Mammary epithelial cell (primary cell): ENCODE measurements at regions of chr12 and their contacts with region 1.

Region 1: GRCh38 chr12:87866578-87867292 is 162.5 kb downstream of the C12orf50 start:
- DNase-seq: peak; percentile 8
- H3K4me3 ChIP-seq: no peak overlapping the region
- H3K27ac ChIP-seq: no peak overlapping the region
- H3K4me1 ChIP-seq: no peaks in the 10 kb centered on the region
- H3K27me3 ChIP-seq: peaks cover 2% of the 10 kb centered on the region
- CTCF ChIP-seq: peak; percentile 62 to 77

Region 2: GRCh38 chr12:87820524-87821194 is 46.1 kb before region 1 on chr12:
- CTCF ChIA-PET with region 1: no interaction called
- dilution Hi-C with region 1: no loop called
- in situ Hi-C with region 1: no loop called
- intact Hi-C with region 1: no loop called
- DNase-seq: peak; percentile 71
- H3K4me3 ChIP-seq: no peak overlapping the region
- H3K27ac ChIP-seq: peak overlapping the region; percentile 75
- H3K4me1 ChIP-seq: peaks cover 8% of the 10 kb centered on the region
- H3K27me3 ChIP-seq: no peaks in the 10 kb centered on the region
- CTCF ChIP-seq: no peak

Region 3: GRCh38 chr12:87953256-87953860 is 86.6 kb after region 1 on chr12:
- CTCF ChIA-PET with region 1: no interaction called
- dilution Hi-C with region 1: no loop called
- in situ Hi-C with region 1: no loop called
- intact Hi-C with region 1: loop called (anchors 2 kb)
- DNase-seq: peak; percentile 21
- H3K4me3 ChIP-seq: no peak overlapping the region
- H3K27ac ChIP-seq: no peak overlapping the region
- H3K4me1 ChIP-seq: no peaks in the 10 kb centered on the region
- H3K27me3 ChIP-seq: peaks cover 5% of the 10 kb centered on the region
- CTCF ChIP-seq: peak; percentile 52 to 63

Region 4: GRCh38 chr12:87995581-87996178 is 128.9 kb after region 1 on chr12:
- CTCF ChIA-PET with region 1: no interaction called
- dilution Hi-C with region 1: no loop called
- in situ Hi-C with region 1: no loop called
- intact Hi-C with region 1: loop called (anchors 5 kb)
- DNase-seq: peak; percentile 53
- H3K4me3 ChIP-seq: no peak overlapping the region
- H3K27ac ChIP-seq: no peak overlapping the region
- H3K4me1 ChIP-seq: no peaks in the 10 kb centered on the region
- H3K27me3 ChIP-seq: no peaks in the 10 kb centered on the region
- CTCF ChIP-seq: peak; percentile 71 to 84

Region 5: DNA sequence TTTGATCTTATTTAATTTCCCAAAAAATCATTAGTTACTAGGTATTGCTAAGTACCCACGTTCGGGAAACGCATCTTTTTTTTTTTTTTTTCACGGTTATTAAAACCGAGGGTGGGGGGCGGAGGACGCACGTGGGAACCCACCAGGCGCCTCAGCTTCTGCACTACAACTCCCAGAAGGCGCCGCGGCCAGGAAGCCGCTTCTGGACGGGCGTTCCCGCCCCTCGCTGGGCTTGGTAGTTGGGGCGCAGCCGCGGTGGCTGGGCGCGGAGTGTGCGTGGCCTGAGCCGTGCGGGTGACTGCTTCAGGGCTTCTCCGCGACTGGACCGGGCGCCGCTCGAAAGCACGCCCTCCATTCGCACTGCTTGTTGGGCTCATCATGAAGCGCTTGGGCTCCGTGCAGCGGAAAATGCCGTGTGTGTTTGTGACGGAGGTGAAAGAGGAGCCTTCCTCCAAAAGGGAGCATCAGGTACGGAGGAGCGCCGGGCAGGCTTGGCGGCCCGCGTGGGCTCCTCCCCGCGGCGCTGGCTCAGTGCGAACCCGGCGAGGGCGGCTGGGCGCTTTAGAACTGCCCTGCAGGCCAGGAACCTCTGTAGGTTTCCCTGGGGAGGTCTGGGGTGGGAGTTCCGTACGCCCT is 168.7 kb after region 1 on chr12:
- CTCF ChIA-PET with region 1: no interaction called
- dilution Hi-C with region 1: no loop called
- in situ Hi-C with region 1: no loop called
- intact Hi-C with region 1: no loop called
- DNase-seq: peak; percentile 80
- H3K4me3 ChIP-seq: peak overlapping the region; percentile 71 to 91 (median 80)
- H3K27ac ChIP-seq: peak overlapping the region; percentile 68
- H3K4me1 ChIP-seq: peaks cover 13% of the 10 kb centered on the region
- H3K27me3 ChIP-seq: no peaks in the 10 kb centered on the region
- CTCF ChIP-seq: no peak

Region 6: GRCh38 chr12:88052686-88053085 is 186.0 kb after region 1 on chr12:
- CTCF ChIA-PET with region 1: no interaction called
- dilution Hi-C with region 1: no loop called
- in situ Hi-C with region 1: no loop called
- intact Hi-C with region 1: loop called (anchors 1 kb)
- DNase-seq: peak; percentile 25
- H3K4me3 ChIP-seq: no peak overlapping the region
- H3K27ac ChIP-seq: no peak overlapping the region
- H3K4me1 ChIP-seq: no peaks in the 10 kb centered on the region
- H3K27me3 ChIP-seq: no peaks in the 10 kb centered on the region
- CTCF ChIP-seq: peak; percentile 30 to 70

Region 7: GRCh38 chr12:88153959-88154358 is 287.2 kb after region 1 on chr12:
- CTCF ChIA-PET with region 1: no interaction called
- dilution Hi-C with region 1: no loop called
- in situ Hi-C with region 1: no loop called
- intact Hi-C with region 1: no loop called
- DNase-seq: no peak
- H3K4me3 ChIP-seq: no peak overlapping the region
- H3K27ac ChIP-seq: no peak overlapping the region
- H3K4me1 ChIP-seq: no peaks in the 10 kb centered on the region
- H3K27me3 ChIP-seq: no peaks in the 10 kb centered on the region
- CTCF ChIP-seq: peak; percentile 29 to 33

Region 8: GRCh38 chr12:88448337-88448915 is 581.7 kb after region 1 on chr12:
- CTCF ChIA-PET with region 1: no interaction called
- dilution Hi-C with region 1: no loop called
- in situ Hi-C with region 1: no loop called
- intact Hi-C with region 1: no loop called
- DNase-seq: no peak
- H3K4me3 ChIP-seq: no peak overlapping the region
- H3K27ac ChIP-seq: no peak overlapping the region
- H3K4me1 ChIP-seq: no peaks in the 10 kb centered on the region
- H3K27me3 ChIP-seq: no peaks in the 10 kb centered on the region
- CTCF ChIP-seq: no peak